Prostate gland (tissue), 2 donors: ENCODE measurements at regions of chr12 and their contacts with region 1.

Region 1: GRCh38 chr12:114684098-114684869 is at the start of gene TBX3:
- DNase-seq: peak; percentile 99
- H3K4me3 ChIP-seq: peak within 1 kb of the TSS; percentile 89 to 94
- H3K27ac ChIP-seq: peak within 1 kb of the TSS; percentile 88 to 98
- H3K4me1 ChIP-seq: peaks cover 21% of the 10 kb centered on the region
- H3K27me3 ChIP-seq: no peaks in the 10 kb centered on the region
- CTCF ChIP-seq: peak in 3 of 4 experiments; percentile 77 to 99 (median 83)
- POLR2A ChIP-seq: peak; percentile 97
- total RNA-seq, gene TBX3: 155 to 259 TPM

Region 2: GRCh38 chr12:114721266-114721665 is 37.0 kb after region 1 on chr12:
- intact Hi-C with region 1: no loop called
- DNase-seq: no peak
- H3K4me3 ChIP-seq: no peak overlapping the region
- H3K27ac ChIP-seq: no peak overlapping the region
- H3K4me1 ChIP-seq: no peaks in the 10 kb centered on the region
- H3K27me3 ChIP-seq: no peaks in the 10 kb centered on the region
- CTCF ChIP-seq: no peak
- POLR2A ChIP-seq: no peak

Region 3: DNA sequence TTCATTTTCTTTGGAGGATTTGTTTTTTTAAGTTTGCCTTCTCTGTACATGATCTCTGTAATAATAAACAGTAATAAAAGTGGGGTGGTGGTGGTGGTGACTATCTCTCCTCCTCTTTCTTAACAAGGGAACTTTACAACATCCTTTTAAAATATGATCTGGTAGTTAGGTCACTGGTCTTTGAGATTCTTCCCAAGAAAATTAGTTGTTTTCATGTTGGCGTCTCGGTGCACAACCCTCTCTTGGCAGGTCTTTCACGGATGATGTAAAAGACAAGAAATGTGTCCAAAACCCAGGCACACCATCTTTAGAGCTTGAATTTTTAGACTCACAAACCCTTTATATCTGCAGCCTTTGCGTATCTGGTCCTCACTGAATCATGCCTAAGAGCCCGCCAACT is 488.2 kb after region 1 on chr12:
- intact Hi-C with region 1: loop called (anchors 5 kb)
- DNase-seq: no peak
- H3K4me3 ChIP-seq: no peak overlapping the region
- H3K27ac ChIP-seq: no peak overlapping the region
- H3K4me1 ChIP-seq: no peaks in the 10 kb centered on the region
- H3K27me3 ChIP-seq: no peaks in the 10 kb centered on the region
- CTCF ChIP-seq: no peak
- POLR2A ChIP-seq: no peak

Region 4: GRCh38 chr12:115199831-115200230 is 515.5 kb after region 1 on chr12:
- intact Hi-C with region 1: no loop called
- DNase-seq: no peak
- H3K4me3 ChIP-seq: no peak overlapping the region
- H3K27ac ChIP-seq: no peak overlapping the region
- H3K4me1 ChIP-seq: no peaks in the 10 kb centered on the region
- H3K27me3 ChIP-seq: no peaks in the 10 kb centered on the region
- CTCF ChIP-seq: no peak
- POLR2A ChIP-seq: no peak

Region 5: DNA sequence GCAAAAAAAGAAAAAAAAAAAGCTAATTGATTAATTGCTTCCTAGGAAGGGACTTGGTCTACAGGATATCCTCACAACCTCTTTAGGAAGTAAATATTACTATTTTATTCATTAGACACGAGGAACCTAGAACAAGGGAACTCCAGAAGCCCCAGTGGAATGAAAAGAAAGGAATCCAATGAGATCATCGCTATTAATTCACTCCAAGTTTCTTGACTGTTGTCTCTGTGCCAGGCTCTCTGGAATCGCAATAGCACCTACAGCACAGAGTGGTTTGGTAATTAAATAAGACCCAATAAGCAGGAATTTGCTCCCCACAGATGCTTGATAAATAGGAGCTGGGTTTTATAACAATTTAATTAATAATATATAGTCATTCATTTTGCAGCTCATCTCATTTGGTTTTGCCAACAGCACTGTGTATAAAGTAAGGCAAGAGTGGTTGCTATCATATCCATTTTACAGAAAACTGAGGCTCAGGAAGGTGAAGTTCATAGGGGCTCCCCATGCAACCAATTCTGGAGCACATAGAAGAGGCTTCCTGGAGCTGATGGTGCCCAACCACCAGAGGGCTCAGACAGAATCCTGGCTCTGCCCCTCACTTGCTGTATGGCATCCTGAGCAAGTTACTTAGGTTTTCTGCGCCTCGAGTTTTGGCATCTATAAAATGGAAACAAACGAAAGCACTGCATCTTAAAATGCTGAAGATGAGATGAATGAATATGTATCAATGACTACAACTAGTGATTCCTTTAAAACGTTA is 1173.1 kb after region 1 on chr12:
- intact Hi-C with region 1: loop called (anchors 10 kb)
- DNase-seq: no peak
- H3K4me3 ChIP-seq: no peak overlapping the region
- H3K27ac ChIP-seq: no peak overlapping the region
- H3K4me1 ChIP-seq: no peaks in the 10 kb centered on the region
- H3K27me3 ChIP-seq: no peaks in the 10 kb centered on the region
- CTCF ChIP-seq: no peak
- POLR2A ChIP-seq: no peak